ENCODE measurements at regions of chr20 and their contacts with region 1.

Region 1: GRCh38 chr20:34190679-34191090 is 50.5 kb upstream of the ASIP start:
- DNase-seq: peak; percentile 85
- H3K4me3 Mint-ChIP-seq: no peak overlapping the region
- H3K27ac Mint-ChIP-seq: no peak overlapping the region
- H3K4me1 Mint-ChIP-seq: peaks cover 7% of the 10 kb centered on the region
- H3K27me3 Mint-ChIP-seq: no peaks in the 10 kb centered on the region
- CTCF ChIP-seq: peak; percentile 81

Region 2: GRCh38 chr20:34180460-34181120 is 10.1 kb before region 1 on chr20:
- CTCF ChIA-PET with region 1: interaction called, 10 read pairs
- intact Hi-C with region 1: no loop called
- DNase-seq: peak; percentile 29
- H3K4me3 Mint-ChIP-seq: no peak overlapping the region
- H3K27ac Mint-ChIP-seq: peak overlapping the region; percentile 79
- H3K4me1 Mint-ChIP-seq: peaks cover 26% of the 10 kb centered on the region
- H3K27me3 Mint-ChIP-seq: no peaks in the 10 kb centered on the region
- CTCF ChIP-seq: no peak

Region 3: GRCh38 chr20:34254979-34255378 is 64.3 kb after region 1 on chr20:
- CTCF ChIA-PET with region 1: interaction called, 10 read pairs
- intact Hi-C with region 1: loop called (anchors 5 kb)
- DNase-seq: no peak
- H3K4me3 Mint-ChIP-seq: no peak overlapping the region
- H3K27ac Mint-ChIP-seq: no peak overlapping the region
- H3K4me1 Mint-ChIP-seq: no peaks in the 10 kb centered on the region
- H3K27me3 Mint-ChIP-seq: no peaks in the 10 kb centered on the region
- CTCF ChIP-seq: no peak

Region 4: GRCh38 chr20:34302723-34303528 is 112.2 kb after region 1 on chr20 and contains the start of gene AHCY:
- CTCF ChIA-PET with region 1: interaction called, 10 read pairs
- intact Hi-C with region 1: no loop called
- DNase-seq: peak; percentile 100
- H3K4me3 Mint-ChIP-seq: peak within 1 kb of the TSS; percentile 91
- H3K27ac Mint-ChIP-seq: peak within 1 kb of the TSS; percentile 89
- H3K4me1 Mint-ChIP-seq: no peaks in the 10 kb centered on the region
- H3K27me3 Mint-ChIP-seq: no peaks in the 10 kb centered on the region
- CTCF ChIP-seq: peak; percentile 7
- total RNA-seq, gene AHCY: 169 and 179 TPM in 2 replicates

Region 5: GRCh38 chr20:34522969-34523871 is 332.5 kb after region 1 on chr20:
- CTCF ChIA-PET with region 1: interaction called, 18 read pairs
- intact Hi-C with region 1: no loop called
- DNase-seq: peak; percentile 84
- H3K4me3 Mint-ChIP-seq: no peak overlapping the region
- H3K27ac Mint-ChIP-seq: peak overlapping the region; percentile 39
- H3K4me1 Mint-ChIP-seq: peaks cover 71% of the 10 kb centered on the region
- H3K27me3 Mint-ChIP-seq: no peaks in the 10 kb centered on the region
- CTCF ChIP-seq: peak; percentile 88

Region 6: GRCh38 chr20:34709831-34710567 is 519.3 kb after region 1 on chr20:
- CTCF ChIA-PET with region 1: no interaction called
- intact Hi-C with region 1: loop called (anchors 10 kb)
- DNase-seq: peak; percentile 67
- H3K4me3 Mint-ChIP-seq: peak overlapping the region; percentile 87
- H3K27ac Mint-ChIP-seq: peak overlapping the region; percentile 72
- H3K4me1 Mint-ChIP-seq: peaks cover 43% of the 10 kb centered on the region
- H3K27me3 Mint-ChIP-seq: peaks cover 17% of the 10 kb centered on the region
- CTCF ChIP-seq: peak; percentile 30

Region 7: DNA sequence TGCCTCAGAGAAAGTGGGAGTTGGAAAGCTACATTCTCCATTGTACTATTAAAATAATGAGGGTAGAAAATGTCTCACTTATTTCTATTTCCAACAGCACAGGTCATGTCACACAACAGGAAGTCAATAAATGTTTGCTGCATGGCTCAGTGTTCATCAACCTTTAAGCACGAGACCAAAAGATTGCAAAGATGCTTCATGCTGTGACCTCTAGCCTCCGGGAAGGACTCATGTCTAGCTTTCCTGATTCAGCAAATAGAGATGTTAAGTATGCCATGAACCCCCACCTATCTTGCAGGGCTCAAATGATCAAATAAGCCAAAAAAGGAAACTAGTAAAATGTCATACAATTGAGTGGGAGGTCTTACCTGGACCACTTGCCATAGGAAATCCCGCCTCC is 577.4 kb after region 1 on chr20:
- CTCF ChIA-PET with region 1: interaction called, 15 read pairs
- intact Hi-C with region 1: loop called (anchors 2 kb)
- DNase-seq: no peak
- H3K4me3 Mint-ChIP-seq: no peak overlapping the region
- H3K27ac Mint-ChIP-seq: no peak overlapping the region
- H3K4me1 Mint-ChIP-seq: peaks cover 5% of the 10 kb centered on the region
- H3K27me3 Mint-ChIP-seq: no peaks in the 10 kb centered on the region
- CTCF ChIP-seq: no peak